Lower lobe of right lung (tissue), 2 donors: ENCODE measurements at regions of chr2 and their contacts with region 1.

Region 1: DNA sequence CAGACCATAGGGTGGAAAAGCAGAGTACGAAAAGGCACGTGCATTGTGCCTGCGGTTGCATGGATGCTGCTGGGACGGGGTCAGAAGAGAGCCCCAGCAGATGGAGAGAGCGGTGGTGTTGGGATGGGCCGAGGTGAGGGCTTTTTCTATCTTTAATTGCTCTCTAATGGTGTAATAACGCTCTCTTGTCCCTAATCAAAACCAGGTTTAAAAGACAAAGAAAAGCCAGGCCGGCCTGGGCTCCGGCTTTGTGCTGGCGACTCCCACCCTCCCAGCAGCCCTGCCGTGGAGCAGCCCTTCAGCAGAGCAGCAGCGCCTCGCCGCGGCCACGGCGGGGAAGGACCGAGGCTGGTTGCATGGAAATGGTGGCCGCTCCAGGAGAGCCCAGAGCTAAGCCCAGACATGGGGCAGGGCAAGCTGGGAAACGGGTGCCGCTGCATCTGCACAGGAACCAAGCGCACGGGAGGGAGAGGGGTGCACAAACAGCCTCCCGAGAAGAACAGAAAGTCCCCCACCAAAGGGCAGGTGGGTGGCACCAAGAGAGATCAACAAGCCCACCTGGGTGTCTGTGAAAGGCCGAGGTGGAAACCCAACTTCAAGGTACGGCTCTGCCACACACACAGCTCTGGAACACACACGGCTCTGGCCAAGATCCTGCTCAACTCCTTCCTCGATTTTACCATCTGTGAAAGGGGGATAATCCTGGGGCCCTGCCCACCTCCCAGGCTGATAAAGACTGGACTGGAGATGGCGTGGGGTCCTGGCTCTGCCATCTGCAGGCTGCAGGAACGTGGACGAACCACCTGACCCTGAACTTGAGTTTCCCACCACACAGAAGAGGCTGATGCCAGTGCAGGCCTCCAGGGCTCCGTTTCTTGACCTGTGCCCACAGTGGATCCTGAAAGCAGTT is 15.0 kb downstream of the HS1BP3 start:
- DNase-seq: peak; percentile 85
- ATAC-seq: peak; percentile 81 to 83
- H3K4me3 ChIP-seq: no peak overlapping the region
- H3K27ac ChIP-seq: no peak overlapping the region
- H3K4me1 ChIP-seq: peaks cover 34% of the 10 kb centered on the region
- H3K27me3 ChIP-seq: no peaks in the 10 kb centered on the region
- CTCF ChIP-seq: peak; percentile 91

Region 2: DNA sequence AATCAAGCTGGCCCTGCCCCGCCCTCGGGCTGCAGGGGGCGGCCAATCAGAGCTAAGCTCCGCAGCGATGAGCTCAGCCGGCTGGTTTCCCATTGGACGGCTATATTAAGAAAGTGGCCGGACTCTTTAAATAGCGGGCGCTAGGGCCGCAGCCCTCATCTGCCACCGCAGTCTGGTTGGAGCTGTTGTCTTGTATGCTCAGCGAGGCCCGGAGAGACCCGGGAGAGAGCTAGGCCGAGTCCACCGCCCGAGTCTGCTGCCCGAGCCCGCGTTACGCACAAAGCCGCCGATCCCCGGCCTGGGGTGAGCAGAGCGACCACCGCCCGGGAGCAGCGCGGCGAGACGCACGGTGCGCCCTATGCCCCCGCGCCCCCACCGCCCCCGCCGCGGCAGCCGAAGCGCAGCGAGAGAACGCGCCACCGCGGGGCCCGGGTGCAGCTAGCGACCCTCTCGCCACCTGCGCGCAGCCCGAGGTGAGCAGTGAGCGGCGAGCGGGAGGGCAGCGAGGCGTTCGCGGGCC is 189.0 kb before region 1 on chr2 and contains the start of gene RHOB:
- intact Hi-C with region 1: loop called (anchors 10 kb)
- DNase-seq: peak; percentile 98
- ATAC-seq: peak; percentile 90 to 96
- H3K4me3 ChIP-seq: peak within 1 kb of the TSS; percentile 89
- H3K27ac ChIP-seq: peak within 1 kb of the TSS; percentile 100
- H3K4me1 ChIP-seq: peaks cover 49% of the 10 kb centered on the region
- H3K27me3 ChIP-seq: no peaks in the 10 kb centered on the region
- CTCF ChIP-seq: peak; percentile 9
- total RNA-seq, gene RHOB: 176 TPM